ENCODE measurements at regions of chrX and their contacts with region 1.

Region 1: GRCh38 chrX:20266810-20267606 is at the start of gene RPS6KA3:
- DNase-seq: peak; percentile 93
- ATAC-seq: peak; percentile 83
- H3K4me3 ChIP-seq: peak within 1 kb of the TSS; percentile 73 to 83 (median 77)
- H3K4me3 Mint-ChIP-seq: peak within 1 kb of the TSS; percentile 98
- H3K27ac ChIP-seq: peak within 1 kb of the TSS; percentile 78 to 88
- H3K27ac Mint-ChIP-seq: peak within 1 kb of the TSS; percentile 99
- H3K4me1 ChIP-seq: peaks cover 17 to 26% of the 10 kb centered on the region in 2 donors
- H3K4me1 Mint-ChIP-seq: peaks cover 20% of the 10 kb centered on the region
- H3K27me3 ChIP-seq: no peaks in the 10 kb centered on the region
- H3K27me3 Mint-ChIP-seq: no peaks in the 10 kb centered on the region
- CTCF ChIP-seq: no peak
- total RNA-seq, gene RPS6KA3: 63.0 and 64.0 TPM in 2 replicates

Region 2: GRCh38 chrX:18674788-18675735 is 1591.9 kb before region 1 on chrX:
- CTCF ChIA-PET with region 1: no interaction called
- POLR2A ChIA-PET with region 1: no interaction called
- intact Hi-C with region 1: loop called (anchors 10 kb)
- DNase-seq: peak; percentile 90
- ATAC-seq: peak; percentile 84
- H3K4me3 ChIP-seq: peak overlapping the region; percentile 57 to 86 (median 72)
- H3K4me3 Mint-ChIP-seq: peak overlapping the region; percentile 84
- H3K27ac ChIP-seq: peak overlapping the region; percentile 78 to 84
- H3K27ac Mint-ChIP-seq: peak overlapping the region; percentile 96
- H3K4me1 ChIP-seq: no peaks in the 10 kb centered on the region
- H3K4me1 Mint-ChIP-seq: peaks cover 10% of the 10 kb centered on the region
- H3K27me3 ChIP-seq: no peaks in the 10 kb centered on the region
- H3K27me3 Mint-ChIP-seq: no peaks in the 10 kb centered on the region
- CTCF ChIP-seq: no peak

Region 3: GRCh38 chrX:20091499-20091898 is 175.5 kb before region 1 on chrX:
- CTCF ChIA-PET with region 1: no interaction called
- POLR2A ChIA-PET with region 1: no interaction called
- intact Hi-C with region 1: no loop called
- DNase-seq: no peak
- ATAC-seq: no peak
- H3K4me3 ChIP-seq: no peak overlapping the region
- H3K4me3 Mint-ChIP-seq: no peak overlapping the region
- H3K27ac ChIP-seq: no peak overlapping the region
- H3K27ac Mint-ChIP-seq: no peak overlapping the region
- H3K4me1 ChIP-seq: no peaks in the 10 kb centered on the region
- H3K4me1 Mint-ChIP-seq: no peaks in the 10 kb centered on the region
- H3K27me3 ChIP-seq: no peaks in the 10 kb centered on the region
- H3K27me3 Mint-ChIP-seq: peaks cover 3% of the 10 kb centered on the region
- CTCF ChIP-seq: no peak

Region 4: GRCh38 chrX:20181598-20182329 is 85.2 kb before region 1 on chrX:
- CTCF ChIA-PET with region 1: no interaction called
- POLR2A ChIA-PET with region 1: no interaction called
- intact Hi-C with region 1: no loop called
- DNase-seq: no peak
- ATAC-seq: no peak
- H3K4me3 ChIP-seq: no peak overlapping the region
- H3K4me3 Mint-ChIP-seq: no peak overlapping the region
- H3K27ac ChIP-seq: peak overlapping the region in 1 of 2 donors; percentile 26
- H3K27ac Mint-ChIP-seq: peak overlapping the region; percentile 50
- H3K4me1 ChIP-seq: no peaks in the 10 kb centered on the region
- H3K4me1 Mint-ChIP-seq: peaks cover 13% of the 10 kb centered on the region
- H3K27me3 ChIP-seq: no peaks in the 10 kb centered on the region
- H3K27me3 Mint-ChIP-seq: no peaks in the 10 kb centered on the region
- CTCF ChIP-seq: no peak

Region 5: GRCh38 chrX:20252381-20253231 is 14.4 kb before region 1 on chrX:
- CTCF ChIA-PET with region 1: interaction called, 6 read pairs
- POLR2A ChIA-PET with region 1: interaction called, 4 read pairs
- intact Hi-C with region 1: loop called (anchors 1 kb)
- DNase-seq: peak; percentile 66
- ATAC-seq: peak; percentile 64
- H3K4me3 ChIP-seq: no peak overlapping the region
- H3K4me3 Mint-ChIP-seq: no peak overlapping the region
- H3K27ac ChIP-seq: no peak overlapping the region
- H3K27ac Mint-ChIP-seq: no peak overlapping the region
- H3K4me1 ChIP-seq: peaks cover 3 to 13% of the 10 kb centered on the region in 2 donors
- H3K4me1 Mint-ChIP-seq: peaks cover 41% of the 10 kb centered on the region
- H3K27me3 ChIP-seq: no peaks in the 10 kb centered on the region
- H3K27me3 Mint-ChIP-seq: no peaks in the 10 kb centered on the region
- CTCF ChIP-seq: peak; percentile 49

Region 6: DNA sequence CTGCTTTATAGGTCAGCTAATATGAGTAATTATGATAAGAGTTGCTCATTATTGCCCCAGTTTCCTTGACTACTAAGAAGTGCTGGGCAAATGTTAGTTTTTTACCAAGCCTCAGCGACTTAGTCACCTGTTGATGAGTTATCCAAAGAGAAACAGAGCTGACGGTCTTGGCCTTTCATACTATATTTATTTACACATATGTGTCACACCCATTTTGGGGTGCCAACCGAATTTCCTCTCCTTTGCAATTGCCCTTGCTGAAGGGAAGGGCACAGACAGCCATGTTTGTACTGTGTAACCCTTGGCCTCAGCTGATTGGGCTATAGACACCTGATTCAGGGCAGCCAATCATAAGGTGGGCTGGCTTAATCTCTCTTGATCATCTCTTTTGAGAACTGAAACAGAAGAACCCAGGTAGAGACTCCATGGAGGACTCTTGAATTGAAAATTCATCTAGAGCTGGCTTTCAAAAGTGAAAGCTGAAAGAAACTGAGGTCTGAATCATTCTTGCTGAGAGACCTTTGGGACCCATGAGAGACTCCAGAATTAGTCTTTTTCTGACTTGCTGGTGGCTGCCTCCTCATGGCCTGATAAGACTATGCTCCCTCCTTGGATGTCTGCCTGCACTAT is 111.4 kb after region 1 on chrX:
- CTCF ChIA-PET with region 1: no interaction called
- POLR2A ChIA-PET with region 1: interaction called, 3 read pairs
- intact Hi-C with region 1: loop called (anchors 2 kb)
- DNase-seq: no peak
- ATAC-seq: no peak
- H3K4me3 ChIP-seq: no peak overlapping the region
- H3K4me3 Mint-ChIP-seq: no peak overlapping the region
- H3K27ac ChIP-seq: no peak overlapping the region
- H3K27ac Mint-ChIP-seq: no peak overlapping the region
- H3K4me1 ChIP-seq: peaks cover 13 to 20% of the 10 kb centered on the region in 2 donors
- H3K4me1 Mint-ChIP-seq: peaks cover 19% of the 10 kb centered on the region
- H3K27me3 ChIP-seq: no peaks in the 10 kb centered on the region
- H3K27me3 Mint-ChIP-seq: no peaks in the 10 kb centered on the region
- CTCF ChIP-seq: no peak

Region 7: GRCh38 chrX:22004866-22005265 is 1737.9 kb after region 1 on chrX:
- CTCF ChIA-PET with region 1: no interaction called
- POLR2A ChIA-PET with region 1: no interaction called
- intact Hi-C with region 1: no loop called
- DNase-seq: no peak
- ATAC-seq: no peak
- H3K4me3 ChIP-seq: no peak overlapping the region
- H3K4me3 Mint-ChIP-seq: no peak overlapping the region
- H3K27ac ChIP-seq: no peak overlapping the region
- H3K27ac Mint-ChIP-seq: no peak overlapping the region
- H3K4me1 ChIP-seq: peaks cover 0 to 4% of the 10 kb centered on the region in 2 donors
- H3K4me1 Mint-ChIP-seq: no peaks in the 10 kb centered on the region
- H3K27me3 ChIP-seq: no peaks in the 10 kb centered on the region
- H3K27me3 Mint-ChIP-seq: no peaks in the 10 kb centered on the region
- CTCF ChIP-seq: no peak